A673 (cell line): ENCODE measurements at regions of chr16 and their contacts with region 1.

Region 1: DNA sequence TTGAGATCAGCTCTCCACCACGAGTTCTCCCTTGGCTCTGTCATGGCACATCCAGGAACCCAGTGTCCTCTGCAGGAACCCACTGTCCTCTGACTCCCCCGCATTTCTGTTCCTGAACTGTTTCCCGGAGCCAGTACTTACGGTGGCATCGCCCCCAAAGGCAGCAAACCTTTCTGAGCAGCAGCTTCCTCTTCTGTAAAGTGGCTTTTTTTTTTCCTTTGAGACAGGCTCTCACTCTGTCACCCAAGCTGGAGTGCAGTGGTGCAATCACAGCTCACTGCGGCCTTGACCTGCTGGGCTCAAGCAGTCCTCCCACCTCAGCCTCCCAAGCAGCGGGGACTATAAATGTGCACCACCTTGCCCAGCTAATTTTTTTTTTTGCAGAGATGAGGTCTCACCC is 32.2 kb downstream of the NAGPA start:
- DNase-seq: no peak
- H3K4me3 ChIP-seq: no peak overlapping the region
- H3K27ac ChIP-seq: no peak overlapping the region
- H3K4me1 ChIP-seq: no peaks in the 10 kb centered on the region
- H3K27me3 ChIP-seq: no peaks in the 10 kb centered on the region
- CTCF ChIP-seq: no peak

Region 2: GRCh38 chr16:5025171-5025632 is 23.6 kb after region 1 on chr16:
- CTCF ChIA-PET with region 1: interaction called, 18 read pairs
- POLR2A ChIA-PET with region 1: no interaction called
- intact Hi-C with region 1: no loop called
- DNase-seq: peak; percentile 39
- H3K4me3 ChIP-seq: no peak overlapping the region
- H3K27ac ChIP-seq: no peak overlapping the region
- H3K4me1 ChIP-seq: no peaks in the 10 kb centered on the region
- H3K27me3 ChIP-seq: no peaks in the 10 kb centered on the region
- CTCF ChIP-seq: peak; percentile 47; the same call in 1 of the 2 replicates

Region 3: GRCh38 chr16:5309946-5310611 is 308.5 kb after region 1 on chr16:
- CTCF ChIA-PET with region 1: no interaction called
- POLR2A ChIA-PET with region 1: no interaction called
- intact Hi-C with region 1: no loop called
- DNase-seq: no peak
- H3K4me3 ChIP-seq: no peak overlapping the region
- H3K27ac ChIP-seq: no peak overlapping the region
- H3K4me1 ChIP-seq: no peaks in the 10 kb centered on the region
- H3K27me3 ChIP-seq: peaks cover 4% of the 10 kb centered on the region
- CTCF ChIP-seq: no peak